OCI-LY7 (cell line): ENCODE measurements at regions of chr11 and their contacts with region 1.

Region 1: DNA sequence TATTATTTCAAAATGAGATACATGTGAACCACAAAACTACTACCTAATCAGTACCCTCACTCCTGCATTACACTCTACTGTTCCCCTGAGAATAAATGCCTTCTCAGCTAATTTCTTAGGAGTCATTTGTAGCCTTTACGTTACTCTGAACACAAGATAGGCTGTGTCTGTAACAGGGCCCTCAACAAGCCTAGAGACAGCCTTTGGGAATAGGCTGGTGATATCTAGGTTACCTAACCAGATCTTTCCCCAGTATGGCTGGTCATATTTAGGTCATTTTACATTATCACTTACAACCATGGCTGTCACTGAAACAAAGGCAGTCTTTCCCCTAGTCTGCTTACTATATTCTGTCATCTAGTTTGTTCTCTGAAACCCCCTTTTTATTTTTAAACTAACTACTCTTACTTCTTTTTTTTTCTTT is 14.2 kb downstream of the ATM start:
- DNase-seq: peak; percentile 19
- H3K4me3 ChIP-seq: peak overlapping the region; percentile 59
- H3K27ac ChIP-seq: peak overlapping the region; percentile 96
- H3K4me1 ChIP-seq: peaks cover 31% of the 10 kb centered on the region
- CTCF ChIP-seq: no peak

Region 2: DNA sequence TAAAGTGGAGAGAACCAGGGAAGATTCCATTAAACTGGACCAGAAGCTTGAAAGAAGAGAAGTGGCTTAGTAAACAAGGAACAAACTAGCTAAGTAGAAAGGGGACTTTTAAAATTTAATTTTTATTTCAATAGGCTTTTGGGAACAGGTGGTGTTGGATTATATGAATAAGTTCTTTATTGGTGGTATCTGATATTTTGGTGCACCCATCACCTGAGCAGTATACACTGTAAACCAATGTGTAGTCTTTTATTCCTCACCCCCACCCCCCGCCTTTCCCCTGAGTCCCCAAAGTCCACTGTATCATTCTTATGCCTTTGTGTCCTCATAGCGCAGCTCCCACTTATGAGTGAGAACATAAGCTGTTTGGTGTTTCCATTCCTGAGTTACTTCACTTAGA is 108.3 kb before region 1 on chr11:
- CTCF ChIA-PET with region 1: no interaction called
- POLR2A ChIA-PET with region 1: no interaction called
- intact Hi-C with region 1: no loop called
- DNase-seq: no peak
- H3K4me3 ChIP-seq: no peak overlapping the region
- H3K27ac ChIP-seq: no peak overlapping the region
- H3K4me1 ChIP-seq: peaks cover 12% of the 10 kb centered on the region
- CTCF ChIP-seq: no peak

Region 3: GRCh38 chr11:108253176-108253575 is 16.1 kb after region 1 on chr11:
- CTCF ChIA-PET with region 1: no interaction called
- POLR2A ChIA-PET with region 1: interaction called, 12 read pairs
- intact Hi-C with region 1: no loop called
- DNase-seq: no peak
- H3K4me3 ChIP-seq: no peak overlapping the region
- H3K27ac ChIP-seq: no peak overlapping the region
- H3K4me1 ChIP-seq: no peaks in the 10 kb centered on the region
- CTCF ChIP-seq: no peak

Region 4: GRCh38 chr11:108269583-108269982 is 32.5 kb after region 1 on chr11:
- CTCF ChIA-PET with region 1: no interaction called
- POLR2A ChIA-PET with region 1: no interaction called
- intact Hi-C with region 1: no loop called
- DNase-seq: no peak
- H3K4me3 ChIP-seq: no peak overlapping the region
- H3K27ac ChIP-seq: no peak overlapping the region
- H3K4me1 ChIP-seq: no peaks in the 10 kb centered on the region
- CTCF ChIP-seq: no peak

Region 5: DNA sequence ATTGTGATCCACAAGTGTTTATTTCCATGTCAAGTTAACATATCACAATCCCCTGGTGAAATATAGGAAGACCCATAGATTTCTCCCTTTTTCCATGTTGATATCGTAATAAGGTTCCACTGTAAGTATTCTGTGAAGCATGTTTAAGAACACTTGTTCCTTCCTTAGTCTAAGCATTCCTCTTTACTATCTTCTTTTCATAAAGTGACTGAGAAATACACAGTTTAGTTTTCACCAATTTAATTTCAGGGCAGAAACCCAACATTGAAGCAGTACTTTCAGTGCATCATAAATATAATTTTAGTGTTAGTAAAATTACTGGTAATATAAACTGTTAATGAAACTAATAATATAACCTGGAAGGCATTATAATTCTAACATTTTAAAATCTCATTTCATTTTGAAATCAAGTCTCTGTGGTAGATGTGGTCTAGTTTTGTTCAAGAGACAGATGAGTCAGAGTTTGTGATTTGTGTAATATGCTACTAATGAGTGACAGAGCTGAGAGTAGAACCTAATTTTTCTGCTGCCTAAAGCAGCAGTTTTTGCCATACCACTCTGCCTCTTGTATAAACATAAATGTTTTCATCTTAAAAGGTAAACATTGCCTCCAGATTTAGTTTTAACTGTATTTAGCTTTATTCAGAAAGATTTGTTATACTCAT is 65.2 kb after region 1 on chr11:
- CTCF ChIA-PET with region 1: no interaction called
- POLR2A ChIA-PET with region 1: interaction called, 10 read pairs
- intact Hi-C with region 1: no loop called
- DNase-seq: no peak
- H3K4me3 ChIP-seq: no peak overlapping the region
- H3K27ac ChIP-seq: no peak overlapping the region
- H3K4me1 ChIP-seq: no peaks in the 10 kb centered on the region
- CTCF ChIP-seq: no peak

Region 6: DNA sequence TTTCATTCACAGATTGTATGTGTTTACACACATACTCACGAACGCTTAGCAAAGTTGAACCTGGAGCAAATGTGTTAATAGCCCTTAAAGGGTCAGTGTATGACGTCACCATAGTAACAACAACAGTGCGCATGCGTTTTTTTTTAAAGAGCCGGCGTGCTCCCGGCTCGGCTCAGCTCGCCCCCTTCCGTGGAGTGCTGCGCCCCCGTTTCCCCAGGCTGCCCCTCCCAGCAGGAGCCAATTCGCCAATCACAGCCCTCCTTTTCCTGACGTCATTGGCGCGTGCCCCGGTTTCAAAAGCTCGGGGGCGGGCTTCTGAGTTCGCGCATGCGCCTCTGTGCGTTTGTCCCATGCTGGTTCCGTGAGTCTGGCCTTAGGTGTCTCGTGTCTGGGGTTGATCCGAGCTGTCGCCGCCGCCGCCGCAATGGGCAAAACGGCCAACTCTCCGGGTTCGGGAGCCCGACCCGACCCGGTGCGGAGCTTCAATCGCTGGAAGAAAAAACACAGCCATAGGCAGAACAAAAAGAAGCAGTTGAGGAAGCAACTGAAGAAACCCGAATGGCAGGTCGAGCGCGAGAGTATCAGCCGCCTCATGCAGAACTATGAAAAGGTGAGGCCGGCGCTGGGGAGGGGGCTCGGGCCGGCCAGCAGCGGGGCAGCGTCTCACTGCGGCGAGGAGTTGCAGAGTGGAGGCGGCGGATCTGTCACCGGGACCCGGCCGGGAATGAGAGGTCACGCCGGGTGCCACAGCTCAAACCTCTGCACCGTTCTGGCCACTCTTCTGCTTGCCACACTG is 427.9 kb after region 1 on chr11 and contains the start of gene DDX10:
- CTCF ChIA-PET with region 1: interaction called, 3 read pairs
- POLR2A ChIA-PET with region 1: interaction called, 3 read pairs
- intact Hi-C with region 1: loop called (anchors 5 kb)
- DNase-seq: peak; percentile 98
- H3K4me3 ChIP-seq: peak within 1 kb of the TSS; percentile 95
- H3K27ac ChIP-seq: peak within 1 kb of the TSS; percentile 88
- H3K4me1 ChIP-seq: peaks cover 67% of the 10 kb centered on the region
- CTCF ChIP-seq: peak; percentile 23; the same call in 1 of the 2 replicates
- total RNA-seq, gene DDX10: 38.0 and 46.5 TPM in 2 replicates